Posterior vena cava (tissue), 2 donors: ENCODE measurements at regions of chr2 and their contacts with region 1.

Region 1: DNA sequence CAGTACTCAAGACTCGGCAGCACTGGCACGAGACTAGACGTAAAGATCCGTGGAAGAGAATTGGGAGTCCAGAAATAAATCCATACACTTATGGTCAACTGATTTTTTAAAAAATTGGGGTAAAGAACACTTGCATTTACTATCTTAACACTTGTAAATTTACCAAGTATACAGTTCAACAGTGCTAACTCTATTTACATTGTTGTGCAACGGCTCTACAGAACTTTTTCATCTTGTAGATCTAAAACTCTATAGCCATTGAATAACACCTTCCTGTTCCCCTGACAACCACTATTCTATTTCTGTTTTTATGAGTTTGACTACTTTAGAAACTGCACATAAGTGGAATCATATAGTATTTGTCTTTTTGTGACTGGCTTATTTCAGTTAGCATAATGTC is 129.4 kb upstream of the SP3 start:
- DNase-seq: no peak

Region 2: DNA sequence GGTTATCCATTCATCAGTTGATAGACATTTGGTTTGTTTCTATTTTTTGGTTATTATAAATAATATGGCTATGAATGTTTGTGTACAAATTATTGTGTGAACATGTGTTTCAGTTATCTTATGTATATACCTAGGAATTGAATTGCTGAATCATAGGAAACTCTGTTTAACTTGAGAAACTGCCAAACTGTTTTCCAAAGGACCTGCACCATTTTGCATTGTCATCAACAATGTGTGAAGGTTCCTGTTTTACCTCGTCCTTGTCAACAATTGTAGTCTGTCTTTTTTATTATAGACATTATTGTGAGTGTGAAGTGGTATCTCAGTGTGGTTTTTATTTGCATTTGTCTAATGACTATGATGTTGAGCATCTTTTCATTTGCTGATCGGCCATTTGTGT is 1521.6 kb before region 1 on chr2:
- intact Hi-C with region 1: loop called in 1 of 2 experiments (anchors 5 kb)
- DNase-seq: no peak

Region 3: GRCh38 chr2:175595139-175595538 is 1500.6 kb after region 1 on chr2:
- intact Hi-C with region 1: no loop called
- DNase-seq: no peak